ENCODE measurements at regions of chr20 and their contacts with region 1.

Region 1: DNA sequence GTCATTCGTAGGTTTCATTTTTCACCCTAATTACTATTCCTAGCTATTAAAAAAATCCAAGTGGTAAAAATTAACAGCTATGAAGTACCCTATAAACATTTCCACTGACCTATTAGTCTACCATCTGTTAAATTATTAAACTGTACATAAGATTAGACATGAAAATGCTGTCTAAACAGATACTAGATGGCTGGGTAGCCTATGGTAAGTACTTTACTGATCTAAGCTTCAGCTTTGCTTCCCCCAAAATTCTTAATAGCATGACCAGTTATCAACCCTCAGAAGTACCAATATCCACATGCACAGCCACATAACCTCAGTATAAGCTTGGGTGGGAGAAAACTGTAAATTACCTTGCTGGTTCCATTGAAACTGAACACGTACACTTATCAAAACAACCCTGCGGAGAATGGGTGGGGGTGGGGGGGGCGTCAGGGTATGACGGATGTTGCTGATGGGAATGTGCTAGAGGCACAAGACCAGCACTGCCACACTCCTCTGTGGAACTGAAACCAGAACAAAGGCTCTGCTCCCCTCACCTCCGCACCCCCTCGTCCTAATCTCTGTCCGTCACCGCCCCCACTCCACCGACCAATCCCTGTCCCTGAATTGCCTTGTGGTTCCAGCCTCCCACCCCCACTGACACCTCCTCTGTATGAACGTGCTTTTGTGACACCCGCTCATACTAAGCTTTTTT is 45.3 kb downstream of the B4GALT5 start:
- DNase-seq: peak; percentile 96
- ATAC-seq: peak; percentile 92
- H3K4me3 ChIP-seq: peak overlapping the region; percentile 59; the same call in 1 of the 2 replicates
- H3K27ac ChIP-seq: peak overlapping the region; percentile 86
- H3K4me1 ChIP-seq: peaks cover 52% of the 10 kb centered on the region
- H3K27me3 ChIP-seq: no peaks in the 10 kb centered on the region
- CTCF ChIP-seq: no peak
- EP300 ChIP-seq: peak; percentile 69 to 74; a peak in 2 of 4 replicates
- POLR2A ChIP-seq: peak; percentile 83
- RAD21 ChIP-seq: no peak

Region 2: GRCh38 chr20:49620364-49621240 is 47.7 kb before region 1 on chr20:
- CTCF ChIA-PET with region 1: interaction called, 15 read pairs
- POLR2A ChIA-PET with region 1: interaction called, 6 read pairs
- RAD21 ChIA-PET with region 1: interaction called, 22 read pairs
- SMC1A ChIA-PET with region 1: interaction called, 110 read pairs
- in situ Hi-C with region 1: no loop called
- intact Hi-C with region 1: loop called (anchors 2 kb)
- DNase-seq: peak; percentile 100
- ATAC-seq: peak; percentile 92
- H3K4me3 ChIP-seq: peak overlapping the region; percentile 8; the same call in 1 of the 2 replicates
- H3K27ac ChIP-seq: peak overlapping the region; percentile 57
- H3K4me1 ChIP-seq: peaks cover 37% of the 10 kb centered on the region
- H3K27me3 ChIP-seq: no peaks in the 10 kb centered on the region
- CTCF ChIP-seq: no peak
- EP300 ChIP-seq: peak; percentile 91 to 92
- POLR2A ChIP-seq: no peak
- RAD21 ChIP-seq: peak; percentile 17; the same call in 1 of the 2 replicates

Region 3: GRCh38 chr20:49685809-49686208 is 17.5 kb after region 1 on chr20:
- CTCF ChIA-PET with region 1: interaction called, 12 read pairs
- POLR2A ChIA-PET with region 1: interaction called, 6 read pairs
- RAD21 ChIA-PET with region 1: interaction called, 4 read pairs
- SMC1A ChIA-PET with region 1: interaction called, 10 read pairs
- in situ Hi-C with region 1: no loop called
- intact Hi-C with region 1: no loop called
- DNase-seq: no peak
- ATAC-seq: no peak
- H3K4me3 ChIP-seq: 0 out of 2 replicates have a peak overlapping the region, but pooled peaks have one; percentile 6
- H3K27ac ChIP-seq: no peak overlapping the region
- H3K4me1 ChIP-seq: peaks cover 38% of the 10 kb centered on the region
- H3K27me3 ChIP-seq: no peaks in the 10 kb centered on the region
- CTCF ChIP-seq: no peak
- EP300 ChIP-seq: no peak
- POLR2A ChIP-seq: no peak
- RAD21 ChIP-seq: no peak

Region 4: DNA sequence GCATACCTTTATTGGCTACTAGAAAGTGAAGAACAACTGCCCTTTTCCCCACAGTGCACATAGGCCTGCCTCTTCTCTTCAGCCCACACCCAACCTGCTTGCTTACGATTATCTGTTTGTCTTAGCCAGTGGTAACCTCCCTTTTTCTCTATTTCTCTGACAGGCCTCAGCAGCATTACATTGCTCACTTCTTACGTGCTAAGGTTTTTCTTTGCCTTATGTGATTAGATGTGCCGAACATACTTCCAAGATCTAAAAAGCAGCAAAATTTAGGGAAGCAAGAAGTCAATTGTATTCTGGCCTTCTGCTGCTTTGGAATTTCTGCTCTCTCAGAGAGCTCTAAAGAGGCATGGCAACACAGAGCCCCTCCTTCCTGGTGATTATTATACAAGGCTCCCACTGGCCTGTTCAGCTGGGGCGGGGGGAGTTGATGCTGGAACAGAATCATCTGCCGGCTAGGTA is 38.3 kb after region 1 on chr20:
- CTCF ChIA-PET with region 1: interaction called, 8 read pairs
- POLR2A ChIA-PET with region 1: interaction called, 8 read pairs
- RAD21 ChIA-PET with region 1: interaction called, 36 read pairs
- SMC1A ChIA-PET with region 1: interaction called, 89 read pairs
- in situ Hi-C with region 1: no loop called
- intact Hi-C with region 1: loop called (anchors 2 kb)
- DNase-seq: no peak
- ATAC-seq: peak; percentile 32
- H3K4me3 ChIP-seq: 0 out of 2 replicates have a peak overlapping the region, but pooled peaks have one; percentile 1
- H3K27ac ChIP-seq: peak overlapping the region; percentile 67
- H3K4me1 ChIP-seq: peaks cover 15% of the 10 kb centered on the region
- H3K27me3 ChIP-seq: no peaks in the 10 kb centered on the region
- CTCF ChIP-seq: no peak
- EP300 ChIP-seq: no peak
- POLR2A ChIP-seq: no peak
- RAD21 ChIP-seq: no peak

Region 5: DNA sequence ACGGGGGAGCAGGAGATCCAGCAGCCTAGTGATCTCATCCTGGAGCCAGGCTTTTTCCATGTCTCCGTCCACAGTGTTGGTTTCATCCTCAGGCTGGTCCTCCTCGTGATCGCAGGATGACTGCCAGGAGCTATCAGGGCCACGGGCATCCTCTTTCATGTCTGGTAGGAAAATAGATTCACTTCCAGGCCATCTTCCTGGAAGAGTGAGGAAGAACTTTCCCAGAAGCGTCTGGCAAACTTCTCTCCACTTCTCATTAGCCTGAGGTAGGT is 129.0 kb after region 1 on chr20:
- CTCF ChIA-PET with region 1: interaction called, 13 read pairs
- POLR2A ChIA-PET with region 1: interaction called, 4 read pairs
- RAD21 ChIA-PET with region 1: interaction called, 20 read pairs
- SMC1A ChIA-PET with region 1: interaction called, 26 read pairs
- in situ Hi-C with region 1: no loop called
- intact Hi-C with region 1: no loop called
- DNase-seq: no peak
- ATAC-seq: no peak
- H3K4me3 ChIP-seq: no peak overlapping the region
- H3K27ac ChIP-seq: no peak overlapping the region
- H3K4me1 ChIP-seq: peaks cover 18% of the 10 kb centered on the region
- H3K27me3 ChIP-seq: no peaks in the 10 kb centered on the region
- CTCF ChIP-seq: no peak
- EP300 ChIP-seq: no peak
- POLR2A ChIP-seq: no peak
- RAD21 ChIP-seq: no peak

Region 6: GRCh38 chr20:49821870-49822331 is 153.6 kb after region 1 on chr20:
- CTCF ChIA-PET with region 1: interaction called, 6 read pairs
- POLR2A ChIA-PET with region 1: interaction called, 4 read pairs
- RAD21 ChIA-PET with region 1: interaction called, 12 read pairs
- SMC1A ChIA-PET with region 1: interaction called, 10 read pairs
- in situ Hi-C with region 1: no loop called
- intact Hi-C with region 1: no loop called
- DNase-seq: no peak
- ATAC-seq: peak; percentile 68
- H3K4me3 ChIP-seq: no peak overlapping the region
- H3K27ac ChIP-seq: 0 out of 2 replicates have a peak overlapping the region, but pooled peaks have one; percentile 14
- H3K4me1 ChIP-seq: peaks cover 22% of the 10 kb centered on the region
- H3K27me3 ChIP-seq: no peaks in the 10 kb centered on the region
- CTCF ChIP-seq: peak; percentile 34 to 55 (median 39); a peak in 5 of 6 replicates
- EP300 ChIP-seq: 0 out of 4 replicates have a peak, but pooled peaks of 1 of the 2 experiments have one; percentile 18
- POLR2A ChIP-seq: no peak
- RAD21 ChIP-seq: peak; percentile 61

Measured in GM12878 (cell line).